Panc1 (cell line): ENCODE measurements at regions of chrX and their contacts with region 1.

Region 1: GRCh38 chrX:107731831-107732502 is 43.6 kb downstream of the TSC22D3 start:
- DNase-seq: no peak
- ATAC-seq: peak; percentile 64; the same call in 1 of the 2 replicates
- H3K4me3 ChIP-seq: no peak overlapping the region
- H3K27ac ChIP-seq: no peak overlapping the region
- H3K4me1 ChIP-seq: no peaks in the 10 kb centered on the region
- H3K27me3 ChIP-seq: no peaks in the 10 kb centered on the region
- CTCF ChIP-seq: no peak

Region 2: DNA sequence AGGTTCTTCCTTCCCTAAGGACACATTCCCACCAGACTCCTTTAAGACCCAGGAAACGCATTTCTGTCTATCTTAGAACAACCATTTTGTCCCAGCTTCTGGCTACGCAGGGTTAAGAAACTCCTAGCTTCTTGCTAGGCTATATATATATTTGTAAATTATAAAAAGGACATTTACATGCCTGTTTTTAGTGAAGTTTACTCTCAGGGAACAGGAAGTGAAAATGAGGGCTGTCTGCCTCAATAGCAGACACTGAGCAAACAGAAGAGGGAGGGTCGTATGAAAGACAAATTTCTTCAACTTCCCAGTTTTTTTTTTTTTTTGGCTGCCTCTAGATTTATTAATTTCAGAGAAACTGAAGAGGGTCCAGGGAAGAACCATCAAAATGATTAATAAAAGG is 291.8 kb before region 1 on chrX:
- CTCF ChIA-PET with region 1: no interaction called
- POLR2A ChIA-PET with region 1: no interaction called
- in situ Hi-C with region 1: no loop called
- intact Hi-C with region 1: no loop called
- DNase-seq: no peak
- ATAC-seq: no peak
- H3K4me3 ChIP-seq: no peak overlapping the region
- H3K27ac ChIP-seq: no peak overlapping the region
- H3K4me1 ChIP-seq: no peaks in the 10 kb centered on the region
- H3K27me3 ChIP-seq: no peaks in the 10 kb centered on the region
- CTCF ChIP-seq: no peak

Region 3: GRCh38 chrX:108341947-108342346 is 610.0 kb after region 1 on chrX:
- CTCF ChIA-PET with region 1: interaction called, 13 read pairs
- POLR2A ChIA-PET with region 1: no interaction called
- in situ Hi-C with region 1: no loop called
- intact Hi-C with region 1: no loop called
- DNase-seq: no peak
- ATAC-seq: no peak
- H3K4me3 ChIP-seq: no peak overlapping the region
- H3K27ac ChIP-seq: no peak overlapping the region
- H3K4me1 ChIP-seq: no peaks in the 10 kb centered on the region
- H3K27me3 ChIP-seq: no peaks in the 10 kb centered on the region
- CTCF ChIP-seq: no peak